ENCODE measurements at regions of chr17 and their contacts with region 1.

Region 1: DNA sequence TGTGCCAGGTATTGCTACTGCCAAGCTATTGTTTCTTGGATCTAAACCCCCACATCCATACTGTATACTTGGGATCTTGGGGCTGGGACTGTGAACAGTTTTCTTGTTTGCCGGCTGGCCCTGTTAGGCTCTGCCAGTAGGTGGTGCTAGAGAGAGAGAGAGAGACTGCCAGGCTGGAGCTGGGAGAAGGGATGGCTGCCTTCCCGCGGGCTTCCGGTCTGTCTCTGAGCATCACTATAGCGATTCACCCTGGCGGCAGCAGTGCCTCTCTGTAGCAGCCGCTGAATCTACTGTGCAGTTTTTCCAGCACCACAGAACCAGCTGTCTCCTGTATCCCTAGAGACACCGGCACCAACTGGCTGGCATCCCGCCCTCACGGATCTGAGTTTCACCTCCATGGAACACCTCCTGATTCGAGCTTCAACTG is 201.2 kb downstream of the UTP18 start:
- DNase-seq: peak; percentile 22
- H3K4me3 ChIP-seq: no peak overlapping the region
- H3K27ac ChIP-seq: no peak overlapping the region
- H3K4me1 ChIP-seq: no peaks in the 10 kb centered on the region
- H3K27me3 ChIP-seq: peaks cover 4% of the 10 kb centered on the region
- CTCF ChIP-seq: peak; percentile 33 to 71 (median 40)
- EP300 ChIP-seq: no peak
- POLR2A ChIP-seq: no peak

Region 2: DNA sequence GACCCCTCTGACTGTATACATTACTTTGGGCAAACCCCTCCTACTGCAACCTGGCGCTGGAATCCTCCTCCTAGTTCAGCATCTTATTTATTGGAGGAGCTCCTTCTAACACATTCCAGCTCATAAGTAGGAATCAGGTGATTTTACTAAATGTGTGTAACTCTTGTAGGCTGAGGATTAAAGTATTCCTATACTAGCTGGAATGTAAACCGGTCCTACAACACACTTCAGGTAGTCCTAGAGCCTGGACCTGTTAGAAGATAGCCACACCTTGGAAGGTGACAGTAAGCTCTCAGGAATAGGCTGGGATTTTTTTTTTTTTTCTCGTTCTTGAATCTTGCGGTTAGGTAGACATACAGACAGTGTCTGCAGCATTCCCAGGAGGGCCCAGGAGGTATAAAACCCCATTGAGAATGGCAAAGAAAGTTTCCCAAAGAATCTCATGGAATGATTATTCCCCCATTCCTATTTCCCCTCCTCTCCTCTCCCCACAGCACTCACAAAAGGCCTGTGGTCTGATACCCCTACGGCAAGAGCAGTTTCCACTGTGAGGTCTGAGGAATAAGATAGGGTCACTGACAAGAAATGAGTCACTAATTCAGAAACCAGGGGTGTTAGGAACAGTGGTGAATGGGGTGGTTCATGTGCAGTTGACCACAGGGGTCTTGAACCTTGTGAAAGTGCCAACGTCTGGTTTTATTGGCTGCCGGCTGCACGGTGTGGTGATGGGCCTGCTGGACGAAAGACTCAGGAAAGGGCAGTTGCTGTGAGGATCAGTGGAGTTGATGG is 65.8 kb after region 1 on chr17:
- in situ Hi-C with region 1: loop called in 1 of 4 experiments (anchors 10 kb)
- intact Hi-C with region 1: no loop called
- DNase-seq: no peak
- H3K4me3 ChIP-seq: no peak overlapping the region
- H3K27ac ChIP-seq: no peak overlapping the region
- H3K4me1 ChIP-seq: no peaks in the 10 kb centered on the region
- H3K27me3 ChIP-seq: no peaks in the 10 kb centered on the region
- CTCF ChIP-seq: no peak
- EP300 ChIP-seq: no peak
- POLR2A ChIP-seq: no peak

Region 3: DNA sequence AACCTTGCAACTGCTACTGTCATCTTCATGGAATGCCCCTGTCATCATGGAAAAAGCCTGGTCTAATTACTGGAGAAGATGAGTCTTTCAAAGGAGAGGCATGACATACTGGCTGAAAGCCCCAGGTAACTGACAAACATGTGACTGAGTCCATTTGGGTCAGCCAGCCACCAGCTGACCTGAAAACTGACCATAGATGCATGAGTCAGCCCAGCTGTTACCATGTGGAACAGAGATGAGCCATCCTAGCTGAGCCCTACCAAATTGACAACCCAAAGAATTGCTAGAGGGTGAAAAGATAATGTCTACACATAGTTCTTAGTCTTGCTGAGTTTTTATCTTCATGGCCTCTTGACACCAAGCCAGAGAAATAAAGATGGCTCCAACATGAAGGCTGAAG is 110.5 kb after region 1 on chr17:
- in situ Hi-C with region 1: loop called in 1 of 4 experiments (anchors 25 kb)
- intact Hi-C with region 1: no loop called
- DNase-seq: no peak
- H3K4me3 ChIP-seq: no peak overlapping the region
- H3K27ac ChIP-seq: no peak overlapping the region
- H3K4me1 ChIP-seq: no peaks in the 10 kb centered on the region
- H3K27me3 ChIP-seq: no peaks in the 10 kb centered on the region
- CTCF ChIP-seq: no peak
- EP300 ChIP-seq: no peak
- POLR2A ChIP-seq: no peak

Region 4: GRCh38 chr17:51888816-51889215 is 427.2 kb after region 1 on chr17:
- in situ Hi-C with region 1: no loop called
- intact Hi-C with region 1: no loop called
- DNase-seq: no peak
- H3K4me3 ChIP-seq: no peak overlapping the region
- H3K27ac ChIP-seq: no peak overlapping the region
- H3K4me1 ChIP-seq: no peaks in the 10 kb centered on the region
- H3K27me3 ChIP-seq: no peaks in the 10 kb centered on the region
- CTCF ChIP-seq: no peak
- EP300 ChIP-seq: no peak
- POLR2A ChIP-seq: no peak